Psoas muscle (tissue), 8 donors: ENCODE measurements at regions of chr18 and their contacts with region 1.

Region 1: DNA sequence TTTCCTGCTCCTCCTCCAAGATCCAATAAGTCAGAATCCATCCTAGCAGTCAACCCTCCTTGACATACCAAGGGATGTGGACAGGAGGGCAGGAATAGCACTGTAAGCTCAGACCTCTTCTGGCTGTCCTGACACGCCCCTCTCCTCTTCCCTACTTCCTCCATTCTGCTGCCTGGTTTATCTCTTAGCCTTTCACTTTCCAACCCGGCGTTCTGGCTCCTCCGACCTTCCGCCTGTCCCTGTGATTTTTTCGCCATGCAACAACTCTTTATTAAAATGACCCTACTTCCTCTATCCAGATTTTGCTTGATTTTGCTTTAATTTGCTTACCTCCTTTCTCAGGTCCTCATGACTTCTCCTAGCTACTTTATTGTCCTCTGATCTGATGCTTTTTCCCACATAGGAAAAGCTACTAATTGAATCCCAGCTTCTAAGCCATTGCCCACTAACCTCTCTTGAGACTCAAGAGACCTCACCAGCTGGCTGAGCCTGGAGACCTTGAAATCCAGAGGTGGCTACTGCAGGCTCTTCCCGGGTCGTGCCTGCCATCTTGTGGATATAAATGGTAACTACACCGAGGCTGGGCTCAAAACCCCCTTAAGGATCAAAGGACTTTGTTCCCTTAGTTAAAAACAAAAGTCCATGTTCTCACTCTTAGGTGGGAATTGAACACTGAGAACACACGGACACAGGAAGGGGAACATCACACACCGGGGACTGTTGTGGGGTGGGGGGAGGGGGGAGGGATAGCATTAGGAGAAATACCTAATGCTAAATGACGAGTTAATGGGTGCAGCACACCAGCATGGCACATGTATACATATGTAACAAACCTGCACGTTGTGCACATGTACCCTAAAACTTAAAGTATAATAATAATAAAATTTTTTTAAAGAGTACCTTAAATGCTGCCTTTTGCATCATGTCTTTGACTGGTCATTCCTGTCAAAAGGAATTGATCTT is 139.4 kb downstream of the AKAIN1 start:
- DNase-seq: peak; percentile 28 to 54
- ATAC-seq: peak in 2 of 4 donors; percentile 43 to 58
- H3K4me3 ChIP-seq: no peak overlapping the region
- H3K27ac ChIP-seq: no peak overlapping the region
- H3K4me1 ChIP-seq: no peaks in the 10 kb centered on the region
- H3K27me3 ChIP-seq: no peaks in the 10 kb centered on the region
- CTCF ChIP-seq: peak; percentile 54

Region 2: DNA sequence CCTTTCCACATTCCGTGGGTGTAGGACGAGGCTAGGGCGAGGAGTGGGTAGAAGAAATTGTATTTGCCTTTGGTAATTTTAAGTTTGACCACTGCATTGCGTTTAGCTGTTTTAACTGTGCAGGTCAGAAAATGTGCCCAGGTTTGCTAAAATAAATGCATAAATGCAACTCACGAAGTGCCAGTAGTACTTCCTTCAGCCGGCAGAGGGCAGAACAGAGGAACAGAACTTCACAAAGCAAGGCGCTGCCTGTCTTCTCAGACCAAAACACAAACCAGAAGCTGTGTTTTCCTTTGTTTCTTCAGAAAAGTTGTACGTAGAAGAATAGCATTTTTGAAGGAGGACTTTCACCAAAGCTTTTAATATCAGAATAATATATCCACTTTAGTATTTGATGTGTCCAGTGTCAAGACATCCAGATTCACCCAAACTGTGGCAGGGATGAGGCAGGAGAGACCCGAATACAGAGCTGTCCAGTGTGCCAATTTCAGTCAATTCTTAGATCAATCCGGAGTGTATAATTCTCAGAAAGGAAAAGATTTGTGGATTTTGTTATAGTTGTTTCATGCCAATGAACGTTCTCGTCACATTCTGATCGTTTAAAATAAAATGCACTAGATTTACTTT is 951.1 kb before region 1 on chr18:
- intact Hi-C with region 1: loop called in 1 of 2 experiments (anchors 10 kb)
- DNase-seq: peak; percentile 56 to 57
- ATAC-seq: no peak
- H3K4me3 ChIP-seq: peak overlapping the region; percentile 23
- H3K27ac ChIP-seq: no peak overlapping the region
- H3K4me1 ChIP-seq: no peaks in the 10 kb centered on the region
- H3K27me3 ChIP-seq: no peaks in the 10 kb centered on the region
- CTCF ChIP-seq: peak; percentile 58